AG04450 (cell line): ENCODE measurements at regions of chr3 and their contacts with region 1.

Region 1: GRCh38 chr3:150721285-150722130 is 17.8 kb upstream of the ERICH6 start:
- DNase-seq: peak; percentile 36
- H3K4me3 ChIP-seq: no peak overlapping the region
- H3K27ac ChIP-seq: no peak overlapping the region
- H3K27me3 ChIP-seq: peaks cover 2% of the 10 kb centered on the region
- CTCF ChIP-seq: peak; percentile 81

Region 2: GRCh38 chr3:150703299-150704134 is 18.0 kb before region 1 on chr3 and contains the start of gene ERICH6:
- CTCF ChIA-PET with region 1: interaction called, 16 read pairs
- POLR2A ChIA-PET with region 1: no interaction called
- DNase-seq: peak; percentile 72
- H3K4me3 ChIP-seq: peak within 1 kb of the TSS; percentile 79
- H3K27ac ChIP-seq: peak within 1 kb of the TSS; percentile 11
- H3K27me3 ChIP-seq: no peaks in the 10 kb centered on the region
- CTCF ChIP-seq: peak; percentile 12; the same call in 1 of the 2 replicates
- polyA plus RNA-seq, gene ERICH6: not detected in 2 replicates

Region 3: GRCh38 chr3:150733936-150734757 is 12.6 kb after region 1 on chr3:
- CTCF ChIA-PET with region 1: interaction called, 10 read pairs
- POLR2A ChIA-PET with region 1: no interaction called
- DNase-seq: no peak
- H3K4me3 ChIP-seq: no peak overlapping the region
- H3K27ac ChIP-seq: no peak overlapping the region
- H3K27me3 ChIP-seq: no peaks in the 10 kb centered on the region
- CTCF ChIP-seq: no peak

Region 4: GRCh38 chr3:150787741-150788370 is 66.3 kb after region 1 on chr3:
- CTCF ChIA-PET with region 1: interaction called, 14 read pairs
- POLR2A ChIA-PET with region 1: interaction called, 4 read pairs
- DNase-seq: no peak
- H3K4me3 ChIP-seq: no peak overlapping the region
- H3K27ac ChIP-seq: no peak overlapping the region
- H3K27me3 ChIP-seq: peaks cover 8% of the 10 kb centered on the region
- CTCF ChIP-seq: peak; percentile 93

Region 5: GRCh38 chr3:150870396-150870795 is 148.9 kb after region 1 on chr3:
- CTCF ChIA-PET with region 1: interaction called, 50 read pairs
- POLR2A ChIA-PET with region 1: no interaction called
- DNase-seq: no peak
- H3K4me3 ChIP-seq: no peak overlapping the region
- H3K27ac ChIP-seq: no peak overlapping the region
- H3K27me3 ChIP-seq: peaks cover 4% of the 10 kb centered on the region
- CTCF ChIP-seq: no peak

Region 6: GRCh38 chr3:150913133-150913922 is 191.8 kb after region 1 on chr3:
- CTCF ChIA-PET with region 1: no interaction called
- POLR2A ChIA-PET with region 1: no interaction called
- DNase-seq: no peak
- H3K4me3 ChIP-seq: no peak overlapping the region
- H3K27ac ChIP-seq: no peak overlapping the region
- H3K27me3 ChIP-seq: peaks cover 3% of the 10 kb centered on the region
- CTCF ChIP-seq: no peak